OCI-LY7 (cell line): ENCODE measurements at regions of chr7 and their contacts with region 1.

Region 1: DNA sequence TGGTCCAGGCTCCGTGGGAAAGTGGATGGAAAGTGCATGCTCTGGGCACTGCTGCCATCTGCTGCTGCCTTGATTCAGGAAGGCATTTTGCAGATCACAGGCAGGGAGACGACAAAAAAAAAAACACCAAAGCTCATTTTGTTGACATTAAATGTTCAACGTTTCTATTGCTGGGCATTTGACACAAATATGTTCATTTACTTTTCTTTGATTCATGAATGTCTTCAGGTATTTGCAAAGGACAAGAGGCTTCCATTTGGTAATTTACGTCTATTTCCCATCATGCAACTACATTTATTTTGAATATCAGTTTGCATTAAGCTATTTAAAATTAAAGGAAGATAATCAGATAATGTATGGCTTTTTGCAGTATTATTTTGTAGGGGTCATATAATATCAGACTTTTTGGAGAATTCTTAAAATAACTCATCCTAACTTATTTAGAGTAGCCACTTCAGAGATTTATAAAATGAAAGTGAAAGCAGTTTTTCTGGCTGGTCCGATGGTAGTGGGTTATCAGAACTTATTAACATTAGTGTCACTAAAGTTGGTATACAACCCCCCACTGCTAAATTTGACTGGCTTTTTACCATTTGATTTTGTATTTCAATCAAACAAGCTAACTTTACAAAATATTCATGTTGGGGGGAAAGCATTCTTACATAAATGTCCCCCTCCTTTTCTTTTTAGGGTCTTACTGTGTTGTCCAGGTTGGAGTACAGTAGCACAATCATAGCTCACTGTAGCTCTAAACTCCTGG is 65.3 kb downstream of the PDIA4 start:
- DNase-seq: peak; percentile 78
- H3K4me3 ChIP-seq: peak overlapping the region; percentile 70
- H3K27ac ChIP-seq: no peak overlapping the region
- H3K4me1 ChIP-seq: peaks cover 17% of the 10 kb centered on the region
- CTCF ChIP-seq: peak; percentile 96

Region 2: GRCh38 chr7:148262721-148263229 is 700.2 kb before region 1 on chr7:
- CTCF ChIA-PET with region 1: no interaction called
- POLR2A ChIA-PET with region 1: no interaction called
- intact Hi-C with region 1: loop called (anchors 5 kb)
- DNase-seq: peak; percentile 51
- H3K4me3 ChIP-seq: no peak overlapping the region
- H3K27ac ChIP-seq: no peak overlapping the region
- H3K4me1 ChIP-seq: no peaks in the 10 kb centered on the region
- CTCF ChIP-seq: peak; percentile 94

Region 3: GRCh38 chr7:148575640-148576411 is 387.2 kb before region 1 on chr7:
- CTCF ChIA-PET with region 1: no interaction called
- POLR2A ChIA-PET with region 1: interaction called, 3 read pairs
- intact Hi-C with region 1: loop called (anchors 1 kb)
- DNase-seq: peak; percentile 74
- H3K4me3 ChIP-seq: no peak overlapping the region
- H3K27ac ChIP-seq: no peak overlapping the region
- H3K4me1 ChIP-seq: no peaks in the 10 kb centered on the region
- CTCF ChIP-seq: peak; percentile 89

Region 4: DNA sequence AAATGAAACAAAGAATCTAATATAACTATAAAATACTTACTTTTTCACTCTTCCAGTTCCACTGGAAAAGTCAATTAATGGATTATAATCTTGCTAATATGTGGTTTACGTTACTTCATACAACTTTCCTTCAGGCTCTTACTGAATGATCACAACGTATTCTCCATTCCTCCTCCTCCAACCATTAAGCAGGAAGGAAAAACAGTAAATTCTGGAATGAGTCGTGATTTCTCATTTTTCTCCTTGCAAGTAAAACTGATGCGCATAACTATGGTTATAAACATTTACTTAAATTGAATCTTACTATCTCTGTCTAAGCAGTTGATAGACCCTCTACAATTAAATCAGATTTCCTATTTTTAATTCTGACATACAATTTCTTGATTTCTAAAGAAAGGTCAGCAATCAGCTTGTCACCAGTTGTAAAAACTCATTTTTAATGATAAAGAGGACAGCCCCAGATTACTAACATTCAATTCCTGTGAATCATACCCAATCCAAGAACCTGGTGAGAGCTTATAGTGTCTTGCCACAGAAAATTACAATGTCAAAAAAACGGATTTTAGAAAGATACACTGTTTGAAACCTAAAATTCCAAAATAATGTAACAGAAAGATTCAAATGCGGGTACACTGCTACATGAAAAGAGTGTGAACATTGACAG is 143.2 kb before region 1 on chr7:
- CTCF ChIA-PET with region 1: no interaction called
- POLR2A ChIA-PET with region 1: interaction called, 4 read pairs
- intact Hi-C with region 1: loop called (anchors 5 kb)
- DNase-seq: no peak
- H3K4me3 ChIP-seq: no peak overlapping the region
- H3K27ac ChIP-seq: no peak overlapping the region
- H3K4me1 ChIP-seq: peaks cover 9% of the 10 kb centered on the region
- CTCF ChIP-seq: no peak

Region 5: GRCh38 chr7:148940702-148941597 is 22.1 kb before region 1 on chr7:
- CTCF ChIA-PET with region 1: interaction called, 3 read pairs
- POLR2A ChIA-PET with region 1: interaction called, 9 read pairs
- intact Hi-C with region 1: loop called (anchors 1 kb)
- DNase-seq: peak; percentile 87
- H3K4me3 ChIP-seq: peak overlapping the region; percentile 82
- H3K27ac ChIP-seq: peak overlapping the region; percentile 51
- H3K4me1 ChIP-seq: peaks cover 13% of the 10 kb centered on the region
- CTCF ChIP-seq: no peak